Activated CD8-positive, alpha-beta memory T cell treated with anti-CD3 and anti-CD28 coated beads, Interleukin-2, amount 10 ng/mL, durations not matched to agents 7 days and 5 days (primary cell): ENCODE measurements at regions of chr6 and their contacts with region 1.

Region 1: GRCh38 chr6:27608916-27609883 is 136.3 kb upstream of the ZNF184 start:
- DNase-seq: no peak
- ATAC-seq: no peak
- H3K4me3 Mint-ChIP-seq: no peak overlapping the region
- H3K27ac Mint-ChIP-seq: no peak overlapping the region
- H3K4me1 Mint-ChIP-seq: peaks cover 21% of the 10 kb centered on the region
- H3K27me3 Mint-ChIP-seq: peaks cover 49% of the 10 kb centered on the region

Region 2: DNA sequence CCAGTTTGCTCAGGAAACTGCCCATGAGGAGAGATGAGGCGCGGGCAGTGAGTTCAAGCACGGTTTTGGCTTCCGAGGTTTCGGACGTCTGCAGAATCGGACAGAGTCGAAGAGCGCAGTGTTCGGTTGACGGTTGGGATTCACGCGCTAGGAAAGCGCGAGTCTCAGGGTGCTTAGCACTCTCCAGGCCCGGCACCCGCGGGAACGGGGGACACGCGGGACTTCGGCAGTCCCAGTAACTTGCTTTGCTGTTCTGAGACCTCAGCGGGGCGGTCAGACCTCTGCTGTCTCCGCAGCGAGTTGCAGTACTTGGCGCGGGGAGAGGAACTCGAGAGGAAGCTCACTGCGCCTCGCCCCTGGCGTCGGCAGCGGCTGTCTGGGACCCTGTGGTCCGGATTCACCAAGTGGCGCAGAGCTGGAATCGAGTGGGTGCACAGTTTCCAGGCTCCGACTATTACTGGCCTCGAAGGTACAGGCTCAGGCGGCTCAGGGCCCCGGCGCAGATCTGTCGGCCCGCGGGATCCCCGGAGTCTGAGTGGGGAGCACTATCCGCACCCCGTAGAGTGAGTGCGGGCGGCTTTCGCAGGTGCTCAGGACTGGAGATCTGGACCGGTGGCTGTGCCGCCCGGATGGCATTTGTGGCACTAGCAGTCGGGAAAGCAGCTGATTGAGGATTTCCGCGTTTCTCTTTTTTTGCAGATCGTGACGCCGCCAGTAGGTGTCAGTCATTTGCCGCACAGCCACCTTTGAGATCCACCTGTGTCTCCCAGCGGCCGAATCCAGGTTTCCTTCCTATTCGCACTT is 296.9 kb before region 1 on chr6 and contains the start of gene POM121L2:
- CTCF ChIA-PET with region 1: interaction called, 13 read pairs
- DNase-seq: peak; percentile 73
- ATAC-seq: peak; percentile 76
- H3K4me3 Mint-ChIP-seq: peak within 1 kb of the TSS; percentile 70
- H3K27ac Mint-ChIP-seq: no peak within 1 kb of the TSS
- H3K4me1 Mint-ChIP-seq: peaks cover 10% of the 10 kb centered on the region
- H3K27me3 Mint-ChIP-seq: peaks cover 76% of the 10 kb centered on the region
- total RNA-seq, gene POM121L2: not detected